Posterior vena cava (tissue), 2 donors: ENCODE measurements at regions of chr3 and their contacts with region 1.

Region 1: DNA sequence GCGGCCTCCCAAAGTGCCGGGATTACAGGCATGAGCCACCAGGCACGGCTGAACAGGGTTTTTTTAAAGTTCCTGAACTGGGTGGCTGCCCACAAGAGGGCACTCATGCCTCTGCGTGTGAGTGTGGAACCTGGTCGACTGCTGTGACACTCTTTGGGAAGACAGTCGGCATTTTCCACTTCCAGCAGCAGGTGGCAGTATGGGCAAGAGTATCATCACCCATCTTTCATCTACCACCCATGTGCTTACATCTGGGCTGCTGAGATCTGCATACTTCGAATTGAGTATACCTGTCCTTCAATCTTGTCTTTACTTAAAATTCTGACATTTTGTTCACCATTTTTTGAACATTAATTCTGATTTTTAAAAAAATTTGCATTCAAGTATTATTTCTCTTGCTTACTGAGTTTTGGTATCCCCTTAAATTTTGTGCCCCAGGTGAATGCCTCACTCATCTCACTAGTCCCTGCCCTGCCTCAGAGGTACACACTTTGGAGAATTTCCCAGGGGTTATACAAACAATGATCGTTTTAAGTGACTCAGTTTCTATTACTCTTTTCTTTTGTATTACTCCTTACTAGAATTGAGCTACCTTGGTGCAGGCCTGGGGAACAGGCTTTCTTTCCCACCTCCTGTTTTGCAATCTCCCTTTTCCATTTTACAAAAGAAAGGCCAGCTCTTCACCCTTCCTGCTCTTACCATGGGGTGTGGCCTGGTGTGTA is 11.8 kb downstream of the CLEC3B start:
- DNase-seq: peak; percentile 96

Region 2: DNA sequence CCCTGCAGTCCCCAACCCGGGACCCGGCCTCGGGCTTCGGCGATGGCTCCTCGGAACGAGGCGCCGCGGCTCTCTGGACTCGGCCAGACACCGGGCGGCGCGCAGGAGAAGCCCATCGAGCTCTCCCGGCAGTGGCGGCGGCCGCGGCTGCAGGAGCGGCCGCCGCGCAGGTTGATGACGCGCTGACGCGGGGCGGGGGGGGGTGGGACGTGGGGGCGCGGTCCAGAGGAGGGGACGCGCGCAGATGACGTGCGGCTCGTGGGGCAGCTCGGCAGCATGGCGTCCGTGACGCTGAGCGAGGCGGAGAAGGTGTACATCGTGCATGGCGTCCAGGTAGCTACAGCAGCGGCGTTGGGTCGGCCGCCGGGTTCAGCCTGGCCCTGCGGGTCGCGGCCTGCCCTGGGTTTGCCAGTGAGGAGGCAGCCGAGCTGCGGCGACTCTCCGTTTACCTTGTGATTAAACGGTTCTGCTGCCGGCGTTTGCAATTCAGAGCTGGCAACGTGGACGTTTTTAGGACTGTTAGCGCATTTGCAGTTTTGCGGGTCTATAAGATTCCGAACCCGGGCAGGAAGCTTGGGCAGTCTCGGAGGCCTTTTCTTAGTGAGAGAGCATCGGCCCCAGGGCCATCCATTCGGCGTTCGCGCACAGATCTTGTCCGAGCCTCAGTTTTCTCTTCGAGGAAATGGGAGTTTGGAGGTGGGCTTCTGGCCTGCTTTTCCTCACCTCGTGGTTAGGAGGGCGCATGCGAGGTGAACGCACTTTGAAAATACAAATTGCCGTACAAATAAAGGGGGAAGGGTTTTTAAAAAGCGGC is 61.7 kb before region 1 on chr3 and contains the starts of genes EXOSC7 and ZDHHC3:
- intact Hi-C with region 1: loop called in 1 of 2 experiments (anchors 10 kb)
- DNase-seq: peak; percentile 97
- total RNA-seq, gene EXOSC7: 27.3 to 30.8 TPM
- total RNA-seq, gene ZDHHC3: 59.0 to 59.7 TPM

Region 3: GRCh38 chr3:45011756-45012508 is 26.0 kb before region 1 on chr3:
- intact Hi-C with region 1: no loop called
- DNase-seq: peak; percentile 90

Region 4: DNA sequence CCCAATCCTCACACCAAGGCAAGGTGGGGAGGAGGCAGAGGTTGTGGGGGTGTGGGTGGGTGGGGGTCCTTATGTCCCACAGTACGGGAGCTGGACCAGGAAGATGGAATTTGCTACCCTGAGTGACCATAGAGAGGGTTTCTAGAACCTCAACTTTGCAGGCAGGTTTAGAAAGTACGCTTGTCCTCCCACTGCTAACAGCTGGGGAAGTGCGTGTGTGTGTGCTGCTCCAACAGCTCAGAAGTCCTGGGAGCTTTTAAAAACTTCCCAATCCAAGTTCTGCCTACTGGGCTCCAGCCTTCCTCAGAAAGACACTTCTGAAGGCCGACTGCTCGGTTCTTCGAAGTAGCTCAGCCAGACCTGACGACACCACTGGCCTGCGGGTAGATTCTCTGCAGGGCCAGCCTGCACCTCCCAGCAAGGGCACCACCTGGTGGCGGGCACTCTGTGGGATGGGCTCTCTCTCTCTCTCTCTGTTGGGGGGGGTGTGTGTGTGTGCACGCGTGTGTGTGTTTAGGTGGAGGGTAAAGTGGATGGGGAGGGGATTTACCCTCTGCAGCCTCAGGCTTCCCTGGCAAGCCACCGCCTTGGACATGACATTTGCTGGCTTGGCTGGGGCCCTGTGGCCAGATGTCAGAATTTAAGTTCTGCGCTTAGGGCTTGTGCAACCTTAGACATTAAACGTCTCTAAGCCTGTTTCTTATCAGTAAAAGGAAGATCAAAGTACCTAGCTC is 172.6 kb after region 1 on chr3:
- intact Hi-C with region 1: loop called (anchors 5 to 10 kb)
- DNase-seq: peak; percentile 95

Region 5: GRCh38 chr3:45398178-45398577 is 360.3 kb after region 1 on chr3:
- intact Hi-C with region 1: loop called in 1 of 2 experiments (anchors 10 kb)
- DNase-seq: no peak

Region 6: DNA sequence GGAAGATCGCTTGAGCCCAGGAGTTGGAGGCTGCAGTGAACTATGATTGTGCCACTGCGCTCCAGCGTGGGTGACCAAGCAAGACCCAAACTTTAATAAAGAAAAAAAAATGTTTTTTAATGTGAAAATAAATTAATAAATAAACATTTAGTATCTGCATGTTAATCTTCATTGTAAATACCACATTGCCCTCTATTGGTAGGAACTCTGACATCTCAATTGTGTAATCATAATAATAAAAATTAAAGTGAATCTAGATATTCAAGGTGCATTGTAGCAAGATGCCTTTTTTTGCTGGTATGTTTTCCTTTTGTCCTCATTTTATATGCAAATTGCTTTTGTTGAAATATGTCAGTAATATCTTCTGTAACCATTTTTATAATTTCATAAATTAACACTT is 461.6 kb after region 1 on chr3:
- intact Hi-C with region 1: loop called (anchors 5 kb)
- DNase-seq: no peak

Region 7: DNA sequence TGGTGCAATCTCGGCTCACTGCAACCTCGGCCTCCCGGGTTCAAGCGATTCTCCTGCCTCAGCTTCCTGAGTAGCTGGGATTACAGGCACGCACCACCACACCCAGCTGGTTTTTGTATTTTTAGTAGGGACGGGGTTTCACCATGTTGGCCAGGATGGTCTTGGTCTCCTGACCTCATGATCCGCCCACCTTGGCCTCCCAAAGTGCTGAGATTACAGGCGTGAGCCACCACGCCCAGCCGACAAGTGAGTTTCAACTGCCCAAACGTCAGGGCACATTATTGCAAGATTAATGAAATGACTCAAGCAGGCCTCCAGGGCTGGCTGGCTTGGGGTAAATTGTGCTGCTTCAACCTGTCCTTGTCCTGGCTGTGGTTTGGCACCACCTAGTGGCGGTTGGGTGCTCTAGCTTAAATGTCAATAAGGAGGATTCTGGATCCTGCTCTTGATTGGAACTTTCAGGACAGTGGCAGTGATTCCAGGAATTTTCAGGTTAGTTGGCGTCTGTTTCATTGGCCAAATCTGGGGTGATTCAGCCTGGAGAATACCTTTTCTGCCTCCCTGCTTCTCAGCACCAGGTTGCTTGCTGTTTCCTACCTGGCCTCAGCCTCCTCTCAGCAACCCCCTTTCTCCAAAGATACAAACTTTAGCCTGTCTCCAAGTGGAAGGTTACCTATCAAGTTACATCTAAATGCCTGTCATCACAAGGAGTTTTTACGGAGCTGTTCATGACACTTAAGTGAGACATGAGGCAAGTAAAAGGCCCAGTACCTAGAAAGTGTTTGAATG is 618.9 kb after region 1 on chr3:
- intact Hi-C with region 1: loop called in 1 of 2 experiments (anchors 10 kb)
- DNase-seq: peak; percentile 97